AG04449 (cell line): ENCODE measurements at regions of chr1 and their contacts with region 1.

Region 1: GRCh38 chr1:178093205-178093957 is 523 bp upstream of the RASAL2 start:
- DNase-seq: peak; percentile 82
- H3K4me3 ChIP-seq: peak overlapping the region; percentile 91
- CTCF ChIP-seq: no peak

Region 2: GRCh38 chr1:178037503-178038253 is 55.7 kb before region 1 on chr1:
- CTCF ChIA-PET with region 1: interaction called, 13 read pairs
- POLR2A ChIA-PET with region 1: no interaction called
- DNase-seq: no peak
- H3K4me3 ChIP-seq: peak overlapping the region; percentile 63
- CTCF ChIP-seq: peak; percentile 56

Region 3: GRCh38 chr1:178057912-178058534 is 35.4 kb before region 1 on chr1:
- CTCF ChIA-PET with region 1: interaction called, 23 read pairs
- POLR2A ChIA-PET with region 1: interaction called, 7 read pairs
- DNase-seq: peak; percentile 50
- H3K4me3 ChIP-seq: no peak overlapping the region
- CTCF ChIP-seq: no peak

Region 4: DNA sequence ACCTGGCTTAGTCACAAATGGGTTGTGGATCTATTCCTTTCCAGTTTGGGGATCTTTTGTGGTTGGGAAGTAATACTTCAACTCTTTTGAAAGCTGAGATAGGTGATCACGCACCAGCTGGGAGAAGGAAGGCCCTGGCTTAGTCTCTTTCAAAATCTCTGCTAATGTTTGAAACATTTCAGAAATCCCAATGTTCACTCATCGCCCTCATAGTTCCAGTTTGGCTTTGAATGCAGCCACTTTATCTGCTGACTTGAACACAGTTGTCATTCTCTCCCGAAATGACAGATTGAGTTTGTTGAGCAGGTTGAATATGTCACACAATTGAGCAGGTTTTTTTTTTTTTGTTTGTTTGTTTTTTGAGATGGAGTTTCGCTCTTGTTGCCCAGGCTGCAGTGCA is 25.1 kb after region 1 on chr1:
- CTCF ChIA-PET with region 1: no interaction called
- POLR2A ChIA-PET with region 1: no interaction called
- DNase-seq: no peak
- H3K4me3 ChIP-seq: no peak overlapping the region
- CTCF ChIP-seq: no peak